BJ (cell line): ENCODE measurements at regions of chr16 and their contacts with region 1.

Region 1: GRCh38 chr16:21708533-21709115 is 44.9 kb downstream of the OTOA start:
- DNase-seq: peak; percentile 13
- H3K4me3 ChIP-seq: no peak overlapping the region
- H3K27me3 ChIP-seq: peaks cover 5% of the 10 kb centered on the region
- CTCF ChIP-seq: peak; percentile 85

Region 2: DNA sequence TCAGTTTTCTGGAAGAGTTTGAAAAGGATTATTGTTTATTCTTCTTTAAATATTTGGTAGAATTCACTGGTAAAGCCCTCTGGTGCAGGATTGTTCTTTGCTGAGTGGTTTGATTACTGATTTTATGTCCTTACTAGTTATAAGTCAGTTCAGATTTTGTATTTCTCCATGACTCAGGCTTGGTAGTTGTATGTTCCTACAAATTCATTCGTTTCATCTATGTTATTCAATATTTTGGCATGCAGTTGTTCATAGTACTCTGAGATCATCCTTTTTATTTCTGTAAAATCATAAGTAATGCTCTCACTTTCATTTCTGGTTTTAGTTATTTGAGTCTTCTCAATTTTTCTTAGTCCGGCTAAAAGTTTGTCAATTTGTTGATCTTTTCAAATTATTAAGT is 372.4 kb before region 1 on chr16:
- CTCF ChIA-PET with region 1: no interaction called
- POLR2A ChIA-PET with region 1: no interaction called
- DNase-seq: no peak
- H3K4me3 ChIP-seq: no peak overlapping the region
- H3K27me3 ChIP-seq: no peaks in the 10 kb centered on the region
- CTCF ChIP-seq: no peak

Region 3: DNA sequence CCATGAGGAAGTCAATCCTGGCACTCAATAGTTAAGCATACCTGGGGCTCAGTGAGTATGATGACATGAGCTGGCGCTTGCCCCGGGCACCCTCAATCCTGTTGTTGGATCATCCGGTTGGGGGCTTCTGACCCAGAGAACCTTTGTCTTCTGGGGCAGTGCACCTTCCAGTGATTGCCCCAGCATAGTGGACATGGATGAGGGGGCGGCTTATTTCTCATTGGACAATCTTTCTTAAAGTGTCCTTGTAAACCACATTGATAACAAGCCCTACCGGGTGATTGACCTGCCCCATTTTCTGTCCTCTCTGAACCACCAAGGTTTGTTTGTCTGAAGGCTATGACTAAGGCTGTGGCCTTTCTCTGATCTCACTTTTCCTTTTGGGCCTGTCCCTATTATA is 74.4 kb before region 1 on chr16:
- CTCF ChIA-PET with region 1: no interaction called
- POLR2A ChIA-PET with region 1: no interaction called
- DNase-seq: no peak
- H3K4me3 ChIP-seq: no peak overlapping the region
- H3K27me3 ChIP-seq: no peaks in the 10 kb centered on the region
- CTCF ChIP-seq: no peak

Region 4: GRCh38 chr16:21694609-21695008 is 14.0 kb before region 1 on chr16:
- CTCF ChIA-PET with region 1: interaction called, 13 read pairs
- POLR2A ChIA-PET with region 1: no interaction called
- DNase-seq: no peak
- H3K4me3 ChIP-seq: no peak overlapping the region
- H3K27me3 ChIP-seq: peaks cover 2% of the 10 kb centered on the region; the same call in 1 of the 2 replicates
- CTCF ChIP-seq: no peak

Region 5: DNA sequence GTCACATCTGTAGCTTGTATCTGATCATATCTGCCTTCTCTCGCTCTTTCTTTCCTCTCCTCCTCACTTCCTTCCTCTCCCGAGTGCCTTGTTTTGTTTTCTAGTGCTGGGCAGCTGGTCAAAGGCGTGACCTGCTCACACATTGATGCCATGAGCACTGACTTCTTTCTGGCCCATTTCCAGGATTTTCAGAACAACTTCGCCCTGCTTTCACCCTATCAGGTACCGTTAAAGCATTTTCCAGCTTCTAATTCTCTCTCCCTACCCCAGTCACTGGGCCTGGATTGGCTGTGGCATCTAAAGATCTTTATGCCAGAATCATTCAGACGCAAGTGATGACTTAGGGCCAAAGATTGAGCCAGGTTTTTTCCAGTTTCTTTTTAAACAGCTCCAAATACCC is 10.7 kb after region 1 on chr16:
- CTCF ChIA-PET with region 1: interaction called, 15 read pairs
- POLR2A ChIA-PET with region 1: no interaction called
- DNase-seq: no peak
- H3K4me3 ChIP-seq: no peak overlapping the region
- H3K27me3 ChIP-seq: 0 out of 2 replicates have a peak, but pooled peaks cover 1% of the 10 kb centered on the region
- CTCF ChIP-seq: no peak